Ovary (tissue), 10 donors: ENCODE measurements at regions of chr19 and their contacts with region 1.

Region 1: DNA sequence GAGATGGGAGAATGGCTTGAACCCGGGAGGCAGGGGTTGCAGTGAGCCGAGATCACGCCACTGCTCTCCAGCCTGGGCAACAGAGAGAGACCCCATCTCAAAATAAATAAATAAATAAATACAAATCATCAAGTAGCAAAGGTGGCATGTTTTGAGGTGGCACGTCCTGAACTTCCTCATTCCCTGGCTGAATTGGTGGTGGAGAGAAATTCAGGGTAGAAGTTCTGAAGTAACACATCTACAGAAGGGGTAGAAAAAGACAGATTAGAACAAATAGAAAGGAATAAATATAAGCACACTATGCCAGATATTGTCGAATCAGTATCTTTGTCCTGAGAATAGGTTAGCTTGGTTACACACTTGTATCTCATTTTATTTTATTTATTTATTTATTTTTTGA is 6.3 kb downstream of the IFI30 start:
- DNase-seq: no peak
- H3K4me3 ChIP-seq: no peak overlapping the region
- H3K27ac ChIP-seq: no peak overlapping the region
- H3K4me1 ChIP-seq: no peaks in the 10 kb centered on the region
- H3K27me3 ChIP-seq: no peaks in the 10 kb centered on the region
- CTCF ChIP-seq: no peak
- EP300 ChIP-seq: no peak
- POLR2A ChIP-seq: no peak

Region 2: DNA sequence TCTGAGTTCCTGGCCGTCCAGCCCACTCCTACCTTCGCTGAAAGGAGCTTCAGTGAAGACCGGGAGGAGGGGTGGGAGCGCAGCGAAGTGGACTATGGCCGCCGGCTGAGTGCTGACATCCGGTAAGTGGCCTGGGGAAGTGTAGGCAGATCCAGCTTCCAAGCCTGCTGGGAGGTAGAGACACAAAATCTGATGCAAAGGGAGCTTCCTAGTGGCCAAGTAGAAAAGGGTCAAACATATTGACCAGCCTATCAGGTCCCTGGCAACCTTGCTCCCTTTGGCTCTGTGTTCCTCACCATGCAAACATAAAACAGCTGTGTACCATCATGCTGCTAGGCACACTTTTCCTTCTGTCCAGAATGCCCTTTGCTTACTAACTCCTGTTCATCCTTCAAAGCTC is 38.1 kb before region 1 on chr19:
- intact Hi-C with region 1: loop called in 1 of 4 experiments (anchors 1 kb)
- DNase-seq: no peak
- H3K4me3 ChIP-seq: no peak overlapping the region
- H3K27ac ChIP-seq: no peak overlapping the region
- H3K4me1 ChIP-seq: no peaks in the 10 kb centered on the region
- H3K27me3 ChIP-seq: no peaks in the 10 kb centered on the region
- CTCF ChIP-seq: no peak
- EP300 ChIP-seq: no peak
- POLR2A ChIP-seq: no peak